SK-N-SH (cell line): ENCODE measurements at regions of chr7 and their contacts with region 1.

Region 1: DNA sequence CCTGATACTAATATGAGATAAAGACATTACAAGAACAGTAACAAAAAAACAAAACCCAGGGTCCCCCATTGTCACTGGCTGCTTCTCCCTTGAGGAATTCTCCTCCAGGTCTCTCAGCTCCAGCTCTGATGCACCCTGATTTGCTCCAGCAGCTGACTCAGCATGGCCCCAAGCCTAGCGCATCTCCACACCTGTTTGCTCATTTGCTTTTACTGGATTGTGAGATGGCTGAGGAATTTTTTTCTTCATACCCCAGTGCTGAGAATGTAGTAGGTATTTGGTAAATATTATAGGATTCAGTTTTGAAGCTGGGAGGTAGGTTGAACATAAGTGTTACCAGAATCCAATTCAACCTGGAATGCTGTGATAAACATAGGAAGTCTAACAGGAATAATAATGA is 171.9 kb downstream of the PKD1L1 start:
- DNase-seq: no peak
- H3K4me3 ChIP-seq: no peak overlapping the region
- H3K27ac ChIP-seq: peak overlapping the region in 1 of 2 experiments; percentile 69; a peak in 2 of 4 replicates
- H3K4me1 ChIP-seq: peaks cover 19 to 23% of the 10 kb centered on the region in 2 experiments
- H3K27me3 ChIP-seq: no peaks in the 10 kb centered on the region
- CTCF ChIP-seq: no peak
- EP300 ChIP-seq: no peak
- RAD21 ChIP-seq: no peak

Region 2: GRCh38 chr7:47572939-47573757 is 203.2 kb before region 1 on chr7:
- CTCF ChIA-PET with region 1: no interaction called
- POLR2A ChIA-PET with region 1: no interaction called
- DNase-seq: no peak
- H3K4me3 ChIP-seq: no peak overlapping the region
- H3K27ac ChIP-seq: peak overlapping the region; percentile 86 to 95
- H3K4me1 ChIP-seq: peaks cover 33 to 63% of the 10 kb centered on the region in 2 experiments; a peak in 3 of 4 replicates
- H3K27me3 ChIP-seq: no peaks in the 10 kb centered on the region
- CTCF ChIP-seq: no peak
- EP300 ChIP-seq: no peak
- RAD21 ChIP-seq: no peak

Region 3: GRCh38 chr7:47763063-47763974 is 13.0 kb before region 1 on chr7:
- CTCF ChIA-PET with region 1: interaction called, 11 read pairs
- POLR2A ChIA-PET with region 1: no interaction called
- DNase-seq: peak; percentile 80
- H3K4me3 ChIP-seq: peak overlapping the region; percentile 8 to 9; a peak in 1 of 4 replicates
- H3K27ac ChIP-seq: peak overlapping the region; percentile 99
- H3K4me1 ChIP-seq: peaks cover 27 to 33% of the 10 kb centered on the region in 2 experiments
- H3K27me3 ChIP-seq: no peaks in the 10 kb centered on the region
- CTCF ChIP-seq: no peak
- EP300 ChIP-seq: peak; percentile 99
- RAD21 ChIP-seq: peak; percentile 25

Region 4: DNA sequence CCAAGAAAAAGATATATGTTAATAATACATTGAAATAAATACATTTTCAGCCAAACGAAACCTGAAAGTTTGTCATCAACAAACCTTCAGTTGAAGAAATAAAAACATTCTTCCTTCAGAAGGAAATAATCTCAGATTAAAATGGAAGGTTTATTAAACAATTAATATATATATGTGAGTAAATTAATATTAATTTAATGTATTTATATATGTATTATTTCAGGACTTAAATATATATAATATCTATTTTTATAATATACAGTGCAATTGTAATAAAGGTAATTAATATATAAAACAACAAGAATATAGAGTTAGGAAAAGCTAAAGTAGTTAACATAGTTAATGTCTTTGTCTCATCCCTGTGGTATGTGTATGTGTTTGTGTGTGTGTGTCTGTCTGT is 1045.8 kb after region 1 on chr7:
- CTCF ChIA-PET with region 1: no interaction called
- POLR2A ChIA-PET with region 1: no interaction called
- DNase-seq: no peak
- H3K4me3 ChIP-seq: no peak overlapping the region
- H3K27ac ChIP-seq: no peak overlapping the region
- H3K4me1 ChIP-seq: no peaks in the 10 kb centered on the region; a peak in 1 of 4 replicates
- H3K27me3 ChIP-seq: no peaks in the 10 kb centered on the region
- CTCF ChIP-seq: no peak
- EP300 ChIP-seq: no peak
- RAD21 ChIP-seq: no peak